ENCODE measurements at regions of chr1 and their contacts with region 1.

Region 1: DNA sequence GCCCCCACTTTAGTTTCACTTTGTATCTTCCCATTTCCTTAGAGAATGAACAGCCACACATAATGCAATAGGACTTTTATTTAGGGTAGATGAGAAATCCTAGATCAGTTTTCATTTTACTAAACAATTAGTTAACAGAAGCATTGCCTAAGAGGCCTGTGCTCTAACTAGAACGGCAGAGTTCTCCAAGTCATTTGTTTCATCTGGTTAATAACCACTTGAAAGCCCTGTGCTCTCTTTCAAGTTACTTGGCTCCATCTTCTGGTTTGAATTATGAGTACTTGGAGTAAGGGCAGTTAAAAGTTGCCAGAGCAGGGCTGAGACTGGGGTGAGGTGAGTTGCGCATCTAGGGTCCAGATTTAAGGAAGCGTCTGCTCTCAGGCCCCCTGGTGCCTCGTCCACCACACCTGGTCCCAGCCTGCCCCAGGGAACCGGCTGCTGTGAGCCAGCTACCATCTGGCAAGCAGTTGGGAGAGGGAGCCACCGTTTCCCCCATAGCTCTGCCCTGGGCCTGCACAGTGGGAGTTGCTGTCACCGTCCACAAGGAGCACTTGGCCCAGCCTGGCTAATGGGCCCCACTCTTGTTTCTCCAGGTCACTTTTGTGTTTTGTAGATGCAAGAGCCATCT is 18.1 kb upstream of the SLC44A3 start:
- DNase-seq: peak; percentile 42
- H3K4me3 ChIP-seq: no peak overlapping the region
- H3K27ac ChIP-seq: peak overlapping the region; percentile 55 to 71
- H3K4me1 ChIP-seq: peaks cover 3% of the 10 kb centered on the region
- H3K27me3 ChIP-seq: no peaks in the 10 kb centered on the region
- CTCF ChIP-seq: peak in 3 of 4 experiments; percentile 34 to 74 (median 63)
- POLR2A ChIP-seq: no peak

Region 2: GRCh38 chr1:94417978-94418663 is 383.9 kb before region 1 on chr1 and contains the start of gene ABCD3:
- intact Hi-C with region 1: loop called (anchors 5 kb)
- DNase-seq: peak; percentile 96
- H3K4me3 ChIP-seq: peak within 1 kb of the TSS; percentile 93 to 98
- H3K27ac ChIP-seq: peak within 1 kb of the TSS; percentile 87 to 92
- H3K4me1 ChIP-seq: peaks cover 5% of the 10 kb centered on the region
- H3K27me3 ChIP-seq: no peaks in the 10 kb centered on the region
- CTCF ChIP-seq: no peak
- POLR2A ChIP-seq: peak; percentile 91
- total RNA-seq, gene ABCD3: 35.5 to 38.5 TPM

Region 3: GRCh38 chr1:94481473-94481933 is 320.5 kb before region 1 on chr1:
- intact Hi-C with region 1: loop called (anchors 5 kb)
- DNase-seq: peak; percentile 46
- H3K4me3 ChIP-seq: no peak overlapping the region
- H3K27ac ChIP-seq: no peak overlapping the region
- H3K4me1 ChIP-seq: no peaks in the 10 kb centered on the region
- H3K27me3 ChIP-seq: no peaks in the 10 kb centered on the region
- CTCF ChIP-seq: peak; percentile 48 to 75 (median 67)
- POLR2A ChIP-seq: no peak

Region 4: GRCh38 chr1:94522304-94522703 is 279.7 kb before region 1 on chr1:
- intact Hi-C with region 1: loop called (anchors 2 kb)
- DNase-seq: peak; percentile 42
- H3K4me3 ChIP-seq: no peak overlapping the region
- H3K27ac ChIP-seq: no peak overlapping the region
- H3K4me1 ChIP-seq: no peaks in the 10 kb centered on the region
- H3K27me3 ChIP-seq: no peaks in the 10 kb centered on the region
- CTCF ChIP-seq: peak in 3 of 4 experiments; percentile 48 to 66 (median 57)
- POLR2A ChIP-seq: no peak

Region 5: GRCh38 chr1:94541175-94542087 is 260.6 kb before region 1 on chr1 and contains the start of gene F3:
- intact Hi-C with region 1: loop called (anchors 5 kb)
- DNase-seq: peak; percentile 94
- H3K4me3 ChIP-seq: peak within 1 kb of the TSS; percentile 75 to 90
- H3K27ac ChIP-seq: peak within 1 kb of the TSS; percentile 90 to 94
- H3K4me1 ChIP-seq: no peaks in the 10 kb centered on the region
- H3K27me3 ChIP-seq: no peaks in the 10 kb centered on the region
- CTCF ChIP-seq: peak in 2 of 4 experiments; percentile 12 to 13
- POLR2A ChIP-seq: peak; percentile 92
- total RNA-seq, gene F3: 36.3 to 120 TPM

Region 6: DNA sequence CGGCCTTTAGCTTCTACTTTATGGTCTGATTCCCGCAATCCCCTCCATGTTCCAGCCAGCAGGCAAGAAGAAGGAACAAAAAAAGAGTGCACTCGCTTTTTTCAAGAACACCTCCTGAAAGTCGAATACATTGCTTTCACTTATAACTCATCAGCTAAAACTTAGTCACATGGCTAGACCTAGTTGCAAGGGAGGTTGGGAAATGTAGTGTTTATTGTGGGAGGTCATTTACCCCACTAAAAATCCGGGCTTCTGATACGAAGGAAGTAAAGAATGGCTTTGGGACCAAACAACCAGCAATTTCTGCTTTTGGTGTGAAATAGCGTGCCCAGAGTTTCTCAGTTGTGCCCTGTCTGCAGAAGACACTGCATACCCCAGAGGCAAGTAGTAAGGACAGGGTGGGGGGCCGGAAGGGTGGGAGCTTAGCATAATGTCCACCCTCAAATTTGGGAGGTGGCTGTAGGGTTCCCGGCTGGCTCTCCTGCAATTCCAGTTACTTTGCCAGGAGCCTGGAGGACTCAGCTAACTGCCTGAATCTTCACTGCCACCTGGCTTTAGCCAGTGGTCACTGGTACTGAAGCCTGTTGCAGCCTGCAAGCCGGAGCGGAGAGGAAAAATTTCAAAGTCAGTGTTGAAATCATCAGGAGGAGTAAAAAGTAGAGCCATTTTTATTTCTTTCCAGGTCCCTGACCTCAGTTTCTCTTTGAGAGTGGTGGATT is 202.8 kb before region 1 on chr1:
- intact Hi-C with region 1: loop called (anchors 5 kb)
- DNase-seq: peak; percentile 29
- H3K4me3 ChIP-seq: no peak overlapping the region
- H3K27ac ChIP-seq: no peak overlapping the region
- H3K4me1 ChIP-seq: peaks cover 2% of the 10 kb centered on the region
- H3K27me3 ChIP-seq: no peaks in the 10 kb centered on the region
- CTCF ChIP-seq: peak; percentile 20 to 83 (median 51)
- POLR2A ChIP-seq: no peak

Region 7: GRCh38 chr1:94743862-94744261 is 58.2 kb before region 1 on chr1:
- intact Hi-C with region 1: no loop called
- DNase-seq: peak; percentile 85
- H3K4me3 ChIP-seq: no peak overlapping the region
- H3K27ac ChIP-seq: peak overlapping the region; percentile 82 to 83
- H3K4me1 ChIP-seq: peaks cover 7% of the 10 kb centered on the region
- H3K27me3 ChIP-seq: no peaks in the 10 kb centered on the region
- CTCF ChIP-seq: no peak
- POLR2A ChIP-seq: no peak

Region 8: GRCh38 chr1:96095849-96096612 is 1294.0 kb after region 1 on chr1:
- intact Hi-C with region 1: no loop called
- DNase-seq: no peak
- H3K4me3 ChIP-seq: no peak overlapping the region
- H3K27ac ChIP-seq: no peak overlapping the region
- H3K4me1 ChIP-seq: no peaks in the 10 kb centered on the region
- H3K27me3 ChIP-seq: no peaks in the 10 kb centered on the region
- CTCF ChIP-seq: no peak
- POLR2A ChIP-seq: no peak